ENCODE measurements at regions of chr1 and their contacts with region 1.

Region 1: DNA sequence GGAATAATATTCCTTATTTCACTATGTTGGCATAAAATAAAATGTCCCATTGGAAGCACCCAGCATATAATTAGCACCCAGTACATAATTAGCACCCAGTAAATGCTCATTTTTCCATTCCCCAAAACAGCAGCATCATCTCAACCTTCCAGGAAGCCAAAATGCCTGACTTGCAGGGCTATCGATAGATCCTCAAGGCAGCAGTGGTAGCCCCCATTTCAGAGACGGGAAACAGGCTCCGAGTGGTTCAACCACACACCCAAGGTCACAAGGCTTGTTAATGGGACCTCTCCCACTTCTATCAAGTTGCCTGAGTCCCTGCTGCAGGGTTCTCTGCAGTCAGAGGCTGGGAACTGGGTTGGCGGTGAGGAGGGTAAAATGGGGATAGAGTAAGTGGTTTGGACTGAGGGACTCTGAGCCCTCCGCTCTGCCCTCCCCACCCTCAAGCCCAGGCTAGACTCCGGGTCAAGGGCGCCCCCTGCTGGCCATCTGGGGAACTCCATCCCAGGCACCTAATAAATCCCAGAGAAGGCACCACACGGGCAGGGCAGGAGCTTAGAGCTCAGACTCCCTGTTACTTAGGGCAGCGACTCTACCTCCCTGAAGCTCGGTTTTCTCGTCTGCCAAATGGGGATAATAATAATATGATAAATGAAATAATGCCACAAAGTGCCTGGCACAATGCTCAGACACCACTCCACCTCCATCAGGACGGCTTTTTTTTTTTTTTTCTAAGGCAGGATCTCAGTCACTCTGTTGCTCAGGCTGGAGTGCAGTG is 21.9 kb upstream of the LAPTM5 start:
- DNase-seq: peak; percentile 82 to 98 (median 88)
- ATAC-seq: peak; percentile 85
- H3K4me3 ChIP-seq: no peak overlapping the region
- H3K4me3 Mint-ChIP-seq: peak overlapping the region in 4 of 10 donors; percentile 4 to 64 (median 34)
- H3K27ac ChIP-seq: no peak overlapping the region
- H3K27ac Mint-ChIP-seq: peak overlapping the region in 5 of 9 donors; percentile 13 to 72 (median 54)
- H3K4me1 ChIP-seq: peaks cover 10 to 15% of the 10 kb centered on the region in 2 donors
- H3K4me1 Mint-ChIP-seq: peaks cover 0 to 19% (median 14%) of the 10 kb centered on the region in 7 donors
- H3K27me3 ChIP-seq: no peaks in the 10 kb centered on the region
- H3K27me3 Mint-ChIP-seq: peaks cover 0 to 12% (median 0%) of the 10 kb centered on the region in 5 donors

Region 2: DNA sequence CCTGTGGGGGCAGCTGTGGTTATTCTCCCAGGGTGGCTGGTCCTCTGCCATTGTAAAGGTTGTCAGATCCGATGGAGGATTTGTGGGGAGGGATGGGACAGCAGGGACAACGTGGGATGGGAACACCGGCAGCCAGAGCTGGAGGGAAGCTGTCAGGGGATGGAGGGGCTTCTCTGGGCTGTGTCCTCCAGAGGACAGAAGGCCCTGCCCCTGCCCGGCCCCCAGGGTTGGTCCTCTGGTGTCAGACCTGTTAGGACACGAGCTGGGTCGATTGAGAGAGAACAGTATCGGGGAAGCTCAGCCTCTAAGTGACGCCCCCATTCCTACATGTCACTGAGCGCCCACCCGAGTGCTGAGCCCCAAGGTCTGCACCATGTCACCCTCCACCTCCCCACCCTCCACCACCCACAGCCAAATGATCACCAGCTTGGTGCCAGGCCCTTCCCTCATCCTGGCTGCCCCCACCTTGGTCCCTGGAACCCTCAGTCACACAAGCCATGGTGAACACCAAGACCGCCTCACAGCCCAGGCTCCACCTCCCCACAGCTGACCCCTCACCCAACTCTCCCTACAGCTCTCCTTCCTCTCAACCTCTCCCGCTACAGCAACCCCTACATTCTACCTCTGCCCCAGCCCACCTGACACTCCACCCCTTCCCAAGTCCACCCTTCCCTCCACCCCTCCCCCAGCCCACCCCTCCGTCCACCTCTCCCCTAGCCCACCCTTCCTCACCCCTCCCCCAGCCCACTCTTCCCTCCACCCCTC is 300.5 kb before region 1 on chr1:
- CTCF ChIA-PET with region 1: no interaction called
- POLR2A ChIA-PET with region 1: no interaction called
- intact Hi-C with region 1: no loop called
- DNase-seq: no peak
- ATAC-seq: no peak
- H3K4me3 ChIP-seq: no peak overlapping the region
- H3K4me3 Mint-ChIP-seq: no peak overlapping the region
- H3K27ac ChIP-seq: no peak overlapping the region
- H3K27ac Mint-ChIP-seq: no peak overlapping the region
- H3K4me1 ChIP-seq: no peaks in the 10 kb centered on the region
- H3K4me1 Mint-ChIP-seq: no peaks in the 10 kb centered on the region
- H3K27me3 ChIP-seq: no peaks in the 10 kb centered on the region
- H3K27me3 Mint-ChIP-seq: peaks cover 0 to 14% (median 12%) of the 10 kb centered on the region in 5 donors

Region 3: GRCh38 chr1:30732277-30732996 is 47.0 kb before region 1 on chr1:
- CTCF ChIA-PET with region 1: interaction called, 55 read pairs
- POLR2A ChIA-PET with region 1: interaction called, 4 read pairs
- intact Hi-C with region 1: no loop called
- DNase-seq: peak in 2 of 9 donors; percentile 26 to 48
- ATAC-seq: peak; percentile 71
- H3K4me3 ChIP-seq: no peak overlapping the region
- H3K4me3 Mint-ChIP-seq: peak overlapping the region in 1 of 10 donors; percentile 34
- H3K27ac ChIP-seq: peak overlapping the region; percentile 48
- H3K27ac Mint-ChIP-seq: peak overlapping the region; percentile 60 to 89 (median 83)
- H3K4me1 ChIP-seq: peaks cover 4 to 10% of the 10 kb centered on the region in 2 donors
- H3K4me1 Mint-ChIP-seq: peaks cover 19 to 30% (median 23%) of the 10 kb centered on the region in 7 donors
- H3K27me3 ChIP-seq: no peaks in the 10 kb centered on the region
- H3K27me3 Mint-ChIP-seq: no peaks in the 10 kb centered on the region

Region 4: GRCh38 chr1:30756545-30757195 is 22.8 kb before region 1 on chr1:
- CTCF ChIA-PET with region 1: interaction called, 99 read pairs
- POLR2A ChIA-PET with region 1: interaction called, 33 read pairs
- intact Hi-C with region 1: loop called (anchors 1 to 2 kb)
- DNase-seq: peak; percentile 45 to 77 (median 65)
- ATAC-seq: peak; percentile 77
- H3K4me3 ChIP-seq: peak overlapping the region; percentile 80
- H3K4me3 Mint-ChIP-seq: peak overlapping the region; percentile 95 to 100 (median 98)
- H3K27ac ChIP-seq: peak overlapping the region; percentile 98
- H3K27ac Mint-ChIP-seq: peak overlapping the region; percentile 90 to 100 (median 97)
- H3K4me1 ChIP-seq: peaks cover 58 to 67% of the 10 kb centered on the region in 2 donors
- H3K4me1 Mint-ChIP-seq: peaks cover 68 to 90% (median 82%) of the 10 kb centered on the region in 7 donors
- H3K27me3 ChIP-seq: no peaks in the 10 kb centered on the region
- H3K27me3 Mint-ChIP-seq: no peaks in the 10 kb centered on the region

Region 5: GRCh38 chr1:30911046-30911954 is 131.8 kb after region 1 on chr1:
- CTCF ChIA-PET with region 1: interaction called, 6 read pairs
- POLR2A ChIA-PET with region 1: interaction called, 8 read pairs
- intact Hi-C with region 1: loop called (anchors 1 kb)
- DNase-seq: peak in 2 of 9 donors; percentile 12 to 54
- ATAC-seq: peak; percentile 60
- H3K4me3 ChIP-seq: no peak overlapping the region
- H3K4me3 Mint-ChIP-seq: no peak overlapping the region
- H3K27ac ChIP-seq: no peak overlapping the region
- H3K27ac Mint-ChIP-seq: peak overlapping the region in 1 of 9 donors; percentile 66
- H3K4me1 ChIP-seq: peaks cover 0 to 6% of the 10 kb centered on the region in 2 donors
- H3K4me1 Mint-ChIP-seq: peaks cover 9 to 18% (median 15%) of the 10 kb centered on the region in 7 donors
- H3K27me3 ChIP-seq: peaks cover 0 to 4% of the 10 kb centered on the region in 2 donors
- H3K27me3 Mint-ChIP-seq: peaks cover 17 to 38% (median 19%) of the 10 kb centered on the region in 5 donors

Region 6: GRCh38 chr1:31027693-31028526 is 248.4 kb after region 1 on chr1:
- CTCF ChIA-PET with region 1: no interaction called
- POLR2A ChIA-PET with region 1: no interaction called
- intact Hi-C with region 1: no loop called
- DNase-seq: no peak
- ATAC-seq: peak; percentile 70
- H3K4me3 ChIP-seq: no peak overlapping the region
- H3K4me3 Mint-ChIP-seq: peak overlapping the region in 3 of 10 donors; percentile 12 to 49 (median 15)
- H3K27ac ChIP-seq: no peak overlapping the region
- H3K27ac Mint-ChIP-seq: peak overlapping the region in 4 of 9 donors; percentile 7 to 52 (median 27)
- H3K4me1 ChIP-seq: peaks cover 8 to 28% of the 10 kb centered on the region in 2 donors
- H3K4me1 Mint-ChIP-seq: peaks cover 50 to 95% (median 81%) of the 10 kb centered on the region in 7 donors
- H3K27me3 ChIP-seq: no peaks in the 10 kb centered on the region
- H3K27me3 Mint-ChIP-seq: no peaks in the 10 kb centered on the region

Region 7: DNA sequence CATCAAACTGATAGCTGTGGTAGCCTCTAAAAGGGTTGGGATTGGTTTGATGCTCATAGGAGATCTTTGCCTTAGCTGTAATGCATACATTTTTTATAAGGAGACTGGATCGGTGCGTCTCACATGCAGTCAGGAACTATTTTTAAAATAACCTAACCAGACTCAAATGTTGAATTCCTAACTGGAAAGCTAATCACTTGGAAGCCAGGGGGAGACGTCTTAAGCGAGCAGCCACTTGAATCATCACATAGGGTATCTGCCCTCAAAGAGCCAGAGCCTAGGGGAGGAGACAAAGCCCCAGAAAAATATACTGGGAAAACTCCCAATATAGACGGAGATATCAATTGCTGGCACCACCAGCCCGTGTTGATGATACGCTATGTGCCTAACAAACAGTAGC is 347.8 kb after region 1 on chr1:
- CTCF ChIA-PET with region 1: no interaction called
- POLR2A ChIA-PET with region 1: no interaction called
- intact Hi-C with region 1: no loop called
- DNase-seq: no peak
- ATAC-seq: no peak
- H3K4me3 ChIP-seq: no peak overlapping the region
- H3K4me3 Mint-ChIP-seq: no peak overlapping the region
- H3K27ac ChIP-seq: no peak overlapping the region
- H3K27ac Mint-ChIP-seq: no peak overlapping the region
- H3K4me1 ChIP-seq: no peaks in the 10 kb centered on the region
- H3K4me1 Mint-ChIP-seq: no peaks in the 10 kb centered on the region
- H3K27me3 ChIP-seq: no peaks in the 10 kb centered on the region
- H3K27me3 Mint-ChIP-seq: peaks cover 0 to 4% (median 0%) of the 10 kb centered on the region in 5 donors

Region 8: DNA sequence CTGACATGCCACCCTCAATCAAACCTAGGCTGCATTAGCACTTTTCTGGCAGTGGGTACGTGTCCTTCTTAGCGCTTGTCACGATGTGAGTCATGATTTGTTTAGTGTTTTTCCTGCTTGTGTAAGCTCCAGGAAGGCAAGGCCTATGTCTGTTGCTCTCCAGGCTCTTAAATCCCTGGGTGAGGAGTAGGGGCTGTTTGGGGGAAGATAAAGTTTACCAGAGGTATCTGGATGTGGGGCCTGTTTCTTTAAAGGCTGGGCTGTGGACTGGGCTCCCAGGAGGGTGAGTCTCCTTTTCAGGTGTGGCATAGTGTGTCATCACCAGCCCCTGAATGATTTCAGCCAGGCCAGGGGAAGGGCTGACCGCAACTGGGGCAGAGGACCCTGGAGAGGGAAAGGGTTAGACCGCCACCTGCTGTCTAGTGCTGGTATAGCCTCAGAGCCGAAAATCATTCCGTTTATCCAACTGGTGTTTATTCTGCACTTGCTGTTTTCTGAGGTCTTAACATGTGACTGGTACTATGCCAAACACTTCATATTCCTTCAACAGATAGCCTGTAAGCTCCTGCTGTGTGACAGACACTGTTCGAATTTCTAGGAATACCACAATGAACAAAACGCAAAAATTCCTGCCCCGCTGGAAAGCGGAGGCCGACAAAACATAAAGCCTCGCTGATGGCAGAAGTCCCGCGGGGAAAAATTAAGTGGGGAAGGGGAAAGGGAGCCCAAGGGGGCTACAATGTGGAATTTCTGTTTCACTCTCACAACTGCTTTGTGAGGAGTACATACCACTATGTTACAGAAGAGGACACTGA is 643.2 kb after region 1 on chr1:
- CTCF ChIA-PET with region 1: no interaction called
- POLR2A ChIA-PET with region 1: no interaction called
- intact Hi-C with region 1: loop called in 1 of 2 experiments (anchors 5 kb)
- DNase-seq: peak; percentile 12 to 68 (median 41)
- ATAC-seq: peak; percentile 83
- H3K4me3 ChIP-seq: no peak overlapping the region
- H3K4me3 Mint-ChIP-seq: no peak overlapping the region
- H3K27ac ChIP-seq: no peak overlapping the region
- H3K27ac Mint-ChIP-seq: peak overlapping the region in 1 of 9 donors; percentile 53
- H3K4me1 ChIP-seq: no peaks in the 10 kb centered on the region
- H3K4me1 Mint-ChIP-seq: peaks cover 0 to 5% (median 2%) of the 10 kb centered on the region in 7 donors
- H3K27me3 ChIP-seq: no peaks in the 10 kb centered on the region
- H3K27me3 Mint-ChIP-seq: peaks cover 18 to 40% (median 25%) of the 10 kb centered on the region in 5 donors